H1 (cell line): ENCODE measurements at regions of chr5 and their contacts with region 1.

Region 1: DNA sequence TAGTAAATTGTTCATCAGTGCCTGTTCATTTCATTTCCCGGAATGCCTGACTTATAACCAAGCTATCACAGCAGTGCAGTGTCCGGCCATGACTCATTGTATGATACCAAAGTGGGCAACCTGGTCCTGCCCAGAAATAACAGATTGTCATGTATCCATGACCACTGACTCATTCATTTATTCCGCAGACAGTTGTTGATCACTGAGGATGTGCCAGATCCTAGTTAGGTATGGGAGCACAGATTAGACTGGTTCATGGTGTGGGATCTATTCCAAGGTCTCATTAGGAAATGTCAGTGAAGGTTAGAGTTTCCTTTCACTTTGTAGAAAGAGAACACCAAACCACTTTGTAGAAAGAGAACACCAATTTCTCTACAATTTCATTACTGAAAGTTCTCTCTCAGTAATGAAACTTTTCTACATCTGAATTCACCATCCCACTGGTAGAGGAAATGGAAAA is 8.7 kb downstream of the NREP start:
- DNase-seq: no peak
- H3K4me3 ChIP-seq: no peak overlapping the region
- H3K27ac ChIP-seq: no peak overlapping the region
- H3K4me1 ChIP-seq: peaks cover 0 to 7% (median 2%) of the 10 kb centered on the region in 4 experiments; a peak in 2 of 7 replicates
- H3K27me3 ChIP-seq: no peaks in the 10 kb centered on the region
- CTCF ChIP-seq: no peak
- EP300 ChIP-seq: no peak
- POLR2A ChIP-seq: no peak
- RAD21 ChIP-seq: no peak

Region 2: DNA sequence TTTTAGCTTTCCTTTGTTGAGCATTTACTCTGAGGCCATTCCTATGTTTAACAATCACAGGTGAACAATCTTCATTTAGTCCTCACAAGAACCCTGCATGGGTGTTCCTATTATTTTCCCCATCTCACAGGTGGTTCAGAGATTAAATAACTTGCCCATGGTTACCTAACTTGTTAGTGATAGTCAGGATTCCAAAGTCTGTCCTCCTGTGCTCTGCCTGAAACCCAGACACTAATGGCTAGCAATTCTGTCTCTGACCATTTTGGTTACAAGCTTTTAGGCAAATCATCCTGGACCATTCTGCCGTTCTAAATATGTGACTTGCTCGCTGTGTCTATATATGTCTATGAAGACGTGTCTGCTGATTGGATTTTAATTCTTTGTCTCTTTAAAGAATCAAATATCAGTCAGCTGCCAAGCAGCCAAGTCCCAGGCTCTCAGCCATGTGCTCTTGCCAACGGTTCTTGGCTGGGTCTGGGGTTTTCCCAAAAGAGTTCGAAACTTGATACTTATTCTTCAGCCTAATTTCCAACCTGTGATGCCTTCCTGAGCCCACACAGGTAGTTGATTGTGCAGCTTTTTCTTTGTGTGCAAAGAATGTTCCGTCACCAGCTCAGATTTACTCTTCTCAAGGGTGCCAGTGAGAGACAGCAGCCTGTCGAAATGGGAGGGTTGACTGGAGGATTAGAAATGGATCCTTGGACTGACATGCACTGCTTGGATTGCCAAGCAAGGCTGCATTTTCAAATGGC is 113.0 kb before region 1 on chr5:
- CTCF ChIA-PET with region 1: no interaction called
- POLR2A ChIA-PET with region 1: no interaction called
- DNase-seq: no peak
- H3K4me3 ChIP-seq: no peak overlapping the region
- H3K27ac ChIP-seq: no peak overlapping the region
- H3K4me1 ChIP-seq: no peaks in the 10 kb centered on the region
- H3K27me3 ChIP-seq: no peaks in the 10 kb centered on the region
- CTCF ChIP-seq: no peak
- EP300 ChIP-seq: no peak
- POLR2A ChIP-seq: no peak
- RAD21 ChIP-seq: no peak

Region 3: DNA sequence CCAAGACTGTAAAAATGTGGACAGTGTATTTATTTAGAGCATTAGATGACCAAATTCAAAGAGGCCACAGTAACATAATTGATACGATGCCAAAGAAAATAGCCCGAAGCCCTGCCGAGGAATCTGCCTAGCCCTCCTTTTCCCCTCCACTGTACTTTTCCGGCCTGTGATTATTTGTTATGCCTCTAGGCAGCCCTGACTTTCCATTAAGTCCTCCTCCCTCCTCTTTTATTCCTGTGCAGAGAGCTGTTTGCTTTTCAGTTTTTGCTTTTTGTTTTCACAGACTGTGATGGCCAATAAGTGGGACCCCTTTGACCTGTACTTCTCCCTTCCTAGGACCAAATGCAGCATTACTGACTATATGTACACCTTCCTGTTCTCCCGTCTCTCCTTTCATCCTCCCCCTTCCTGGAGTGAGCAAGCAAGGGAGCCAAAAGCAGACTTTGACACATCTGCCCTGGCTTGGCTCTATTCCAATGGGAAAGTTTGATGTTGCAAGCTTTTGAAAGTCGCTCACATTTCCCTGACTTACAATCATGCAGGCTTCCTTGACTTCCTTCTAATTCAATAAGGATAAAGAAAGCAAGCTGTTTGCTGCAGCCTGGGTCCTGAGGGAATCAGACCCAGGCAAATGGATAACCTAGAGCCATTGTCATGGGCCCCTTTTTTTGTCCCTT is 67.5 kb before region 1 on chr5:
- CTCF ChIA-PET with region 1: no interaction called
- POLR2A ChIA-PET with region 1: no interaction called
- DNase-seq: no peak
- H3K4me3 ChIP-seq: no peak overlapping the region
- H3K27ac ChIP-seq: no peak overlapping the region
- H3K4me1 ChIP-seq: peaks cover 0 to 2% (median 1%) of the 10 kb centered on the region in 4 experiments; a peak in 2 of 7 replicates
- H3K27me3 ChIP-seq: no peaks in the 10 kb centered on the region
- CTCF ChIP-seq: no peak
- EP300 ChIP-seq: no peak
- POLR2A ChIP-seq: no peak
- RAD21 ChIP-seq: no peak

Region 4: DNA sequence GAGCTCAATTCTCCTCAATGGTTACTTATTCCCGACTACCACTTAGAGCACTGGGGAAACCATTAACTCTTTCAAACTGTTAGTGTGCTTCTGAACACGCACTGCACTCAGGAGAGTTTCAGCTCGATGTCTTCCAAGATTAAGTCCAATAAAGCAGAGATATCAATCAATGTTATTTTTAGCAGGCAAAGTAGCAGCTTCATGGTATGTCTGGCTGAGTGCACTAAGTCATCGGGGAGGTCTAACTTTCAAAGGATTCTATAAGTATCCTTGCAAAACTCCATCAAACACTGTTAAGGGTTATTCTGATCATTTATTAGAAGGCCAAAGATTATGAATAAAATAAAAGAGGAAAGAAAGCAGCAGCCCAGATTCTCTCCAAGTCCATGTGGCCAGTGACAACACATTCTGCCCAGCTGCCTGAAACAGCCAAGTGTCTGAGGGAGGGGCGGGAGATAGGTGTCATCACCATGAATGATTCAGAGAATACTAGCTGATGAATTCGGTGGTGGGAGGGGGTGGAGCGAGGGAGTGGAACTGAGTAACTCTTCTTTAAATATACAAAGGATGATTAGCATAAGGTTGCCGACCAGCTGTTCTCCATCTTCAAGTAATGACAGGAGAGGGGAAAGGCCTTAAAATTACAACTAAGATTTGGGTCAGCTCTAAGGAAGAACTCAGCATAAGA is 12.6 kb before region 1 on chr5:
- CTCF ChIA-PET with region 1: interaction called, 3 read pairs
- POLR2A ChIA-PET with region 1: interaction called, 12 read pairs
- DNase-seq: peak in 1 of 2 experiments; percentile 23
- H3K4me3 ChIP-seq: no peak overlapping the region
- H3K27ac ChIP-seq: no peak overlapping the region
- H3K4me1 ChIP-seq: peaks cover under 1 to 10% (median 5%) of the 10 kb centered on the region in 4 experiments; a peak in 3 of 7 replicates
- H3K27me3 ChIP-seq: no peaks in the 10 kb centered on the region
- CTCF ChIP-seq: no peak
- EP300 ChIP-seq: no peak
- POLR2A ChIP-seq: no peak
- RAD21 ChIP-seq: no peak